ENCODE measurements at regions of chr7 and their contacts with region 1.

Region 1: DNA sequence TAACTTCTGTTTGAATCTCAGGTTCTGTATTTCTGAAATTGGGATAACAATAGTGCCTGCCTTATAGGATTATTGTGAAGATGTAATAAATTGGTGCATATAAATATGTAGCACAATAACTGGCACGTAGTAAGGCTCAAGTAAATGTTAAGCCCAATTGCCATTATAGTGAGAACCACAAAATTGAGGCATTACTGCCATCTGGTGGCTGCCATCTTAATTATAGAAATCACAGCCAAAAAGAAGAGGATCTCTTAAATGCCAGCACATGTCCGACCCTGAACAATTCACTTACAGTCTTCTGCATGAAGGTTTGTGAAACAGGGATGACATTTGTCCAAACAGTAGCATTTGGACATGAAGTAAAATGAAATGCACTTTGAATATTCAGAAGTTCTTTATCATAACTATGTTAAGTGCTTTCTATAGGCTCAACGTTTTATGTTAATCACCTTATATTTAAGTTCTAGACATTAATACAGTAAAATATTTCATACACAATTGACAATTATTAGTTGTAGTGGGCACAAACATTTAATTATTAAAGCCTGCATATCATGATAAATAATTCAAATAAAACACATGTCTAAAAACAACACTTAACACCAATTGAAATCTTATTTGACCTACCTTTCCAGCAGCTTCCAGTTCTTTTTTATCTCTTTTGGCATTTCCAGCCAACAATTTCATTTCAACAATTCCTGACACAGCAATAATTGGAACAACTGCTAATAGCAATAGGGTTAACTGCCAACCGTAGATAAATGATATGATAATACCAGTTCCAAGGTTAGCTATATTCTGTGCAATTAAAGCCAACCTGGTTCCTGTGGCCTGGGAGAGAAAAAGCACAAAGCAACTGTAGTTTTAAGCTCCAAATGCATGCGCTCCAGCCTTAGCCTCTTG is 58.5 kb downstream of the ABCB4 start:
- DNase-seq: peak; percentile 50
- H3K4me3 Mint-ChIP-seq: no peak overlapping the region
- H3K27ac Mint-ChIP-seq: no peak overlapping the region
- H3K4me1 Mint-ChIP-seq: no peaks in the 10 kb centered on the region
- H3K27me3 Mint-ChIP-seq: peaks cover 13% of the 10 kb centered on the region

Region 2: DNA sequence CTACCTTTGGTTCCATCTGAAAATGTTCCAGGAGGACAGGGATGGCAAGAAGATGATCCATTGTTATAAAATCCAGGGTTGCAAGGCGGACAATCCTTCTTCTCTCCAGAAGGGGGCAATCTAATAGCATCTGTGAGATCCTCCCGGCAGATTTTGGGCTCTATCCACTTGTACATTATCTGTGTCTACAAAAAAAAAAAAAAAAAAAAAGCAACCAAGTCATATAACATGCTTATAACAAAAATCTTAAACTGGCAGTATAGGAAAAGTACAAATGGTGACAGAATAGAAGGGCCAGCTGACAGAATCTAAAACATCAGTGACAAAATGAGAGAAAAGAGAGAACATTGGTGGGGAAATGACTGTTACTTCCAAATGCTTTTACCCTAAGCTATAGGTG is 490.2 kb before region 1 on chr7:
- intact Hi-C with region 1: loop called (anchors 1 kb)
- DNase-seq: no peak
- H3K4me3 Mint-ChIP-seq: no peak overlapping the region
- H3K27ac Mint-ChIP-seq: no peak overlapping the region
- H3K4me1 Mint-ChIP-seq: no peaks in the 10 kb centered on the region
- H3K27me3 Mint-ChIP-seq: peaks cover 6% of the 10 kb centered on the region

Region 3: DNA sequence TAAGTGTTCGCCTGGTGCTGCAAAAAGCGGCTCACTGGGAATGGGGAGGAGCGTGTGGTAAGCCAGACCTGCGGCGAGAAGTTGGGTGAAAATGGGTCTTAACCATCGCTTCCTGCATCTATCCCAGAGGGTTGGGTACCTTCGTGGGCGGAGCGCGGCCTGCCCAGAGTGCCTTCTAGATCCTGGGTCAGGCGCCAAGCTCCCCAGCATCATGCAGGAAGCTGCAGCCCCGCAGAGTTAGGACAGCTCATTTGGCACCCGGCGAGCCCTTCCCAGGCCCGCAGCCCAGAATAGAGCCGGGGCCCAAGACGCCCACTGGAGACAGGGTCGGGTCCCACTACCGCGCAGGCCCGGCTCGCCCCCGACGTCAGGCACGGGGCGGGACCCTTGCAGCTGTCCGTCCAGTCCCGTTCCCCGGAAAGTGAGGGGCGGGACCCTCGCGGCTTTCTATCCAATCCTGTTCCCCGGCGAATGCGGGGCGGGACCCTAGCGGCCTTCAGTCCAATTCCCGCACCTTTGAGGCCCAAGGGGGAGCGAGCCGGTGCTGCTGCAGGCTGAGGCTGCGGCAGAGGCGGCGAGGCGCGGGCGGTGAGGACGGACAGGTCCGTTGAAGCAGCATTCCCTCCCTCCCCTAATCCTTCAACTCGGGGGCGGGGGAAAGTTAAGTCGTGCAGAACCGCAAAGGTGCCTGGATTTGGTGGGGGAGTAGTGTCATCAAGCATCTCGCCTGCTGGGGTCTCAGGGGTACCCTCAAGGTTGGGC is 71.6 kb before region 1 on chr7 and contains the start of gene CROT:
- intact Hi-C with region 1: loop called (anchors 1 kb)
- DNase-seq: peak; percentile 93
- H3K4me3 Mint-ChIP-seq: peak within 1 kb of the TSS; percentile 92
- H3K27ac Mint-ChIP-seq: peak within 1 kb of the TSS; percentile 89
- H3K4me1 Mint-ChIP-seq: peaks cover 57% of the 10 kb centered on the region
- H3K27me3 Mint-ChIP-seq: peaks cover 1% of the 10 kb centered on the region
- total RNA-seq, gene CROT: 5.9 and 6.5 TPM in 2 replicates

Measured in activated T-helper 1 cell treated with anti-CD3 and anti-CD28 coated beads, Interleukin-12 subunit alpha, Interleukin-12 subunit beta, Interleukin-2, Interleukin-4 antibody, amounts not matched to agents 30 ng/mL and 10 ng/mL and 1 ng/mL, durations not matched to agents 14 hours and 24 hours and 36 hours (primary cell).